Activated B cell treated with CpG ODN at 0.5 μM for 24 hours (primary cell): ENCODE measurements at regions of chr4 and their contacts with region 1.

Region 1: GRCh38 chr4:40309250-40309774 is 25.8 kb upstream of the CHRNA9 start:
- DNase-seq: peak; percentile 78
- ATAC-seq: peak; percentile 20
- H3K4me3 Mint-ChIP-seq: peak overlapping the region; percentile 60
- H3K27ac Mint-ChIP-seq: peak overlapping the region; percentile 92
- H3K4me1 Mint-ChIP-seq: peaks cover 74% of the 10 kb centered on the region
- H3K27me3 Mint-ChIP-seq: no peaks in the 10 kb centered on the region
- CTCF ChIP-seq: no peak

Region 2: DNA sequence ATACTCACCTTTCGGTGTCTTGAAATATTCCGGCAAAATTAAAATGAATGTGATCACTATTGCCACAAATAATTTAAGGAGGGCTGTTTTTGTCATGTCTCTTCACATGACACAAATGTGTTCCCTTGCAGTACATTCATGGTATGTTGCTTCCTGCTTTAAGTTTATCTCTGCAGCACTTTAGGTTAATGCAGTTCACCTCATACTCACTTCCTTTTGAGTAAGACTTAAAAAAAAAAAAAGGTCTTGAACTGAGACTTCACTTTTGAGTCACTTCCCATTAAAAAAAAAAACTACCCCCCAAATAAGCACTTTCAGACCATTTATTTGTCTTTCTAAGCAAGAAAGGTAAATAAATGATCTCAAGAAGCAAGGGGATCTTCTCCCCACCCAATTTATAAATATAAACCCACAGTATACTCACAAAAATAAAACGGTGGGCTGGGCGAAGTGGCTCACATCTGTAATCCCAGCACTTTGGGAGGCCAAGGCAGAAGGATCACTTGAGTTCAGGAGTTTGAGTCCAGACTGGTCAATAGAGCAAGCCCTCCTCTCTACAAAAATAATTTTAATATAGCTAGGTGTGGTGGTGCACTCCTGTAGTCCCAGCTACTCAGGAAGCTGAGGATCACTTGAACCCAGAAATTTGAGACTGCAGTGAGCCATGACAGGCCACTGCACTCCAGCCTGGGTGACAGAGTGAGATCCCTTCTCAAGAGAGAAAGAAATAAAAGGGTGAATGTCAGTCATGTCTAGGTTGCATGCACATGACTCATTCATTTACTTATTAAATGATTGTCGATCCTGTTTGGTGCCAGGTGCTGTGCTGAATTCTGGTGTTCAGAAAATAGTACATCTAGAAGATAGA is 1276.9 kb before region 1 on chr4 and contains the start of gene TMEM156:
- CTCF ChIA-PET with region 1: no interaction called
- POLR2A ChIA-PET with region 1: no interaction called
- intact Hi-C with region 1: loop called (anchors 10 kb)
- DNase-seq: no peak
- ATAC-seq: peak; percentile 69
- H3K4me3 Mint-ChIP-seq: peak within 1 kb of the TSS; percentile 83
- H3K27ac Mint-ChIP-seq: peak within 1 kb of the TSS; percentile 93
- H3K4me1 Mint-ChIP-seq: peaks cover 64% of the 10 kb centered on the region
- H3K27me3 Mint-ChIP-seq: no peaks in the 10 kb centered on the region
- CTCF ChIP-seq: no peak
- total RNA-seq, gene TMEM156: 26.0 and 29.5 TPM in 2 replicates

Region 3: GRCh38 chr4:39977489-39978377 is 331.6 kb before region 1 on chr4 and contains the start of gene PDS5A:
- CTCF ChIA-PET with region 1: interaction called, 4 read pairs
- POLR2A ChIA-PET with region 1: no interaction called
- intact Hi-C with region 1: loop called (anchors 5 kb)
- DNase-seq: peak; percentile 91
- ATAC-seq: peak; percentile 86
- H3K4me3 Mint-ChIP-seq: peak within 1 kb of the TSS; percentile 87
- H3K27ac Mint-ChIP-seq: peak within 1 kb of the TSS; percentile 92
- H3K4me1 Mint-ChIP-seq: peaks cover 32% of the 10 kb centered on the region
- H3K27me3 Mint-ChIP-seq: no peaks in the 10 kb centered on the region
- CTCF ChIP-seq: peak; percentile 27
- total RNA-seq, gene PDS5A: 91.9 and 103 TPM in 2 replicates

Region 4: GRCh38 chr4:40185830-40186664 is 123.3 kb before region 1 on chr4:
- CTCF ChIA-PET with region 1: interaction called, 7 read pairs
- POLR2A ChIA-PET with region 1: interaction called, 108 read pairs
- intact Hi-C with region 1: loop called (anchors 1 kb)
- DNase-seq: no peak
- ATAC-seq: peak; percentile 78
- H3K4me3 Mint-ChIP-seq: peak overlapping the region; percentile 80
- H3K27ac Mint-ChIP-seq: peak overlapping the region; percentile 91
- H3K4me1 Mint-ChIP-seq: peaks cover 88% of the 10 kb centered on the region
- H3K27me3 Mint-ChIP-seq: no peaks in the 10 kb centered on the region
- CTCF ChIP-seq: no peak

Region 5: DNA sequence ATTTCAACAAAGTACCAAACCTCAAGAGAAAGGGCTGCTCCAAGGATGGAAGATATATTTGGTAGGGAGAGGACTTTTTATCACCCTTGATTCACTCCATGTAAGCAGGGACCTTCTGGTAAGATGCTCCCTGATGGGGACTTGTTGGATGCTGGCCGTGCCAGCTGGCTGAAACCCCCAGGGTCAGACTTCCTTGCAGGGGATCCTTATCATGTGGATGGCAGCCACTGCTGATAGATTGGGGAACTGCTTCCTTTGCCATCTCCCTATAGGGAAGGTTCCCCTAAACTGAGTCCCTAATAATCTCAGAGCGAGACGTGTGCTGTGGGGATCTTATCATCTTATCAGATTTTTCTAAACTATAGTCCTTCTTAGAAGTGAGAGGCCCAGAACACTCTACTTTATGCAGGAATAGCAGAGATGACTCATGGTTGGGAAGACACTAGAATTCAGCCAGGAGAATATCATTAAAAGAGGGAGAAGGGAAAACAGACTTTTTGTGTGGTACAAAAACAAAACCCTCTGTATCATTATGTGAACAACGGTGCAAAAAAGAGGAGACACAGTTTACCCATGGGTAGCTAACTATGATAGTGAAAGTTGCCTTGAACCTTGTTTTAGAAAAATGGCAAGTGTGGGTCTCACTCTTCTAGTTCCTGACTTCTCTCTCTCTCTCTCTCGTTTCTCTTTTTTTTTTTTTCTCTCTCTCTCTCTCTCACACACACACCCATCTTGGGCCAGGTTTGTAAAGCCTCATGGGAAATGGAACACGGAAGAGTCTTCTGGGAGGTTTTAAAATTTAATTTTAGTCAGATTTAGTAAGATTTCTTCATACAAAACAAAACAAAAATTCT is 96.4 kb before region 1 on chr4:
- CTCF ChIA-PET with region 1: interaction called, 5 read pairs
- POLR2A ChIA-PET with region 1: interaction called, 64 read pairs
- intact Hi-C with region 1: no loop called
- DNase-seq: no peak
- ATAC-seq: no peak
- H3K4me3 Mint-ChIP-seq: peak overlapping the region; percentile 42
- H3K27ac Mint-ChIP-seq: peak overlapping the region; percentile 80
- H3K4me1 Mint-ChIP-seq: peaks cover 96% of the 10 kb centered on the region
- H3K27me3 Mint-ChIP-seq: no peaks in the 10 kb centered on the region
- CTCF ChIP-seq: no peak

Region 6: DNA sequence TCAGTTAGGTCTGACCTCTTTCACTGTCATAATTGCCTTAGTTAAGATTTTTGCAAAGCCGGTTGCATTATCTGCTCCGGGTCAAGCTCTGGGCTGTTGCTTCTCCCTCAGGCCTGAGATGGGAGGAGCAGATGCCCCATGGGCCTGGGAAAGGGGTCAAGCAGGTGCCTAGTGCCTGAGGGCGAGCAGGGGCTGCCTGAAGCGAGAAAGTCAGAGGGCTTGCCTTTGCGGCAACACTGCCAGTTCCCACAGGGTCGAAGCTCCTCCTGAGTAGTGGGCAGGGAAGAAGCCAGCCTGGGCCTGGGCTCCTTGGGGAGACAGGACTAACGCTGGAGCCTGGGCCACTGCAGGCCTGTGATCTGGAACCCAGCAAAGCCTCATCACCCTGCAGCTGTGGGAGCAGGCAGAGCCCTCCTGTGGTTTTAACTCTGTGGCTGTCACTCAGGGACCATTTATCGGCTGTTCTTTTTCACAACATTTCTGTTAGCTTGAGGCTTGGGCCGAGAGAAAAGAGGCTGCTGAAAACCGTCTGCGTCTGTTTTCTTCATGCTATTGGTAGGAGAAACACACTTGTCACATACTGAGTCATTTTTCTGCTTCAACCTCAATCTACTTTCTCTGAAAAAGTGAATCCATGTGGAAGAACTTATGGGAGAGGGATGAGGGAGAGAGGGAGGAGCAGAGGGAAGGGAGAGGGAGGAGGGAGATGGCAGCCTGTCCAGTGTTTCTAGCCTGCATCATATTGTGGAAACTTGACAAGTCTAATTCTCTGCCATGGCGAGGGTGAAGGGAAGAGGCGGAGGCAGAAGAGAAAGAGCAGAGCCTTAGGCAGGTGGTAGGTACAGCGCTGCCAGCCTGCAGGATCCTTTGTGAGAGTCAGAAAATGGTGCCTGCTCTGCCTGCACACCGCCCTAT is 44.1 kb before region 1 on chr4:
- CTCF ChIA-PET with region 1: interaction called, 5 read pairs
- POLR2A ChIA-PET with region 1: interaction called, 4 read pairs
- intact Hi-C with region 1: loop called (anchors 1 kb)
- DNase-seq: no peak
- ATAC-seq: peak; percentile 52
- H3K4me3 Mint-ChIP-seq: peak overlapping the region; percentile 50
- H3K27ac Mint-ChIP-seq: peak overlapping the region; percentile 66
- H3K4me1 Mint-ChIP-seq: peaks cover 36% of the 10 kb centered on the region
- H3K27me3 Mint-ChIP-seq: no peaks in the 10 kb centered on the region
- CTCF ChIP-seq: no peak